ENCODE measurements at regions of chr4 and their contacts with region 1.

Region 1: GRCh38 chr4:48047421-48047844 is 30.9 kb downstream of the NIPAL1 start:
- DNase-seq: peak; percentile 55
- H3K4me3 Mint-ChIP-seq: peak overlapping the region; percentile 44
- H3K27ac Mint-ChIP-seq: peak overlapping the region; percentile 10
- H3K4me1 Mint-ChIP-seq: peaks cover 35% of the 10 kb centered on the region
- H3K27me3 Mint-ChIP-seq: peaks cover 63% of the 10 kb centered on the region

Region 2: GRCh38 chr4:48103483-48104139 is 56.2 kb after region 1 on chr4:
- intact Hi-C with region 1: loop called (anchors 1 kb)
- DNase-seq: no peak
- H3K4me3 Mint-ChIP-seq: no peak overlapping the region
- H3K27ac Mint-ChIP-seq: peak overlapping the region; percentile 63
- H3K4me1 Mint-ChIP-seq: peaks cover 24% of the 10 kb centered on the region
- H3K27me3 Mint-ChIP-seq: no peaks in the 10 kb centered on the region

Region 3: GRCh38 chr4:48653217-48654014 is 606.0 kb after region 1 on chr4:
- intact Hi-C with region 1: no loop called
- DNase-seq: no peak
- H3K4me3 Mint-ChIP-seq: peak overlapping the region; percentile 15
- H3K27ac Mint-ChIP-seq: no peak overlapping the region
- H3K4me1 Mint-ChIP-seq: peaks cover 44% of the 10 kb centered on the region
- H3K27me3 Mint-ChIP-seq: no peaks in the 10 kb centered on the region

Region 4: DNA sequence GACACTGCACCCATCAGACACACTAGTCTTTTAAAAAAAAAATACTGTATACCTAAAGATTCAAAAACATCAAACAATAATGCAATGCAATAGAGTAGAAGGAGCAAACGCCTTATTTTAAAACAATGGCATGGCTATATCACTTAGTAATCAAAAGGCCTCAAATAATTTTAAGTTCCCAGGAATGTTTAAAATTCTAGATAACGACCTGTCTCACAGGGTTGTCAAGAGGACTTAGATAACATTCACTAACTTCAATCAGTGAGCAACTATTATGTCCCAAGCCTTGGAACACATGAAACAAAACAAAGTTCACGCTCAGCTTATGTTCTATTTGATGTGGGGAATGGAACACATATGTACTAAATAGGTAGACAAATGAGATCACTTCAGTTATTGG is 626.1 kb after region 1 on chr4:
- intact Hi-C with region 1: loop called (anchors 10 kb)
- DNase-seq: no peak
- H3K4me3 Mint-ChIP-seq: no peak overlapping the region
- H3K27ac Mint-ChIP-seq: no peak overlapping the region
- H3K4me1 Mint-ChIP-seq: peaks cover 4% of the 10 kb centered on the region
- H3K27me3 Mint-ChIP-seq: no peaks in the 10 kb centered on the region

Measured in activated T-helper 1 cell treated with anti-CD3 and anti-CD28 coated beads, Interleukin-12 subunit alpha, Interleukin-12 subunit beta, Interleukin-2, Interleukin-4 antibody, amounts not matched to agents 30 ng/mL and 10 ng/mL and 1 ng/mL, durations not matched to agents 14 hours and 24 hours and 36 hours (primary cell).